Heart left ventricle (tissue), 16 donors: ENCODE measurements at regions of chr19 and their contacts with region 1.

Region 1: DNA sequence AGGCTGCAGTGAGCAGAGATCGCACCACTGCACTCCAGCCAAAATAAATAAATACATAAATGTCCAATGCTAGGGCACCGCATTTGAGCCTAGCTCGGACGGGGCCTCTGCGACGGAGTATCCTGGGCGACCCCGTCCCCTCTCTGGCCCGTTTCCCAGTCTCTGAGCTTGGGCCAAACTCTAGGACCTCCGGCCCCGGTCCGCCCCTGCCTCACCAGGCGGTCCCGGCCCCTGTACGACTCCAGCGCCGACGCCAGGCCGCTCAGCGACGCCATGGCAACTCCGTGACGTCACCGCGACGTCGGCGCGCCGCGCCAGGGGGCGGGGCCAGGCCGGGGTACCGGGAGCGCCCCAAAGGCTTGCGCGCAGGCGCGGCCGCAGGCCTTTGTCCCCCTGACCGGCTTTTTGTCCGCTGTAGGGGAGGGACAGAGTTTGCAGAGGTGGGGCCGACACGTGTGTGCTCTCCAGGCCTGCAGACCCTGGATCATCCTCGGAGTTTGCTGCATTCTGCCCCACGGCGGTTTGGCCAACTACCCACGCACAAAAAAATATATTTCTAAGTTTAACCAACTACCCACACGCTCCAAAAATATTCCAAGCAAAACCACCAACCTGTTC is at the start of gene PEX11G:
- DNase-seq: peak; percentile 91 to 97 (median 93)
- ATAC-seq: peak; percentile 90 to 99 (median 98)
- H3K4me3 ChIP-seq: peak within 1 kb of the TSS; percentile 45 to 90 (median 64)
- H3K27ac ChIP-seq: peak within 1 kb of the TSS in 11 of 12 donors; percentile 65 to 93 (median 82)
- H3K4me1 ChIP-seq: peaks cover 0 to 34% (median 7%) of the 10 kb centered on the region in 12 donors
- H3K27me3 ChIP-seq: no peaks in the 10 kb centered on the region
- CTCF ChIP-seq: no peak
- POLR2A ChIP-seq: peak; percentile 38 to 89
- total RNA-seq, gene PEX11G: 0.93 to 2.9 (median 1.5) TPM

Region 2: DNA sequence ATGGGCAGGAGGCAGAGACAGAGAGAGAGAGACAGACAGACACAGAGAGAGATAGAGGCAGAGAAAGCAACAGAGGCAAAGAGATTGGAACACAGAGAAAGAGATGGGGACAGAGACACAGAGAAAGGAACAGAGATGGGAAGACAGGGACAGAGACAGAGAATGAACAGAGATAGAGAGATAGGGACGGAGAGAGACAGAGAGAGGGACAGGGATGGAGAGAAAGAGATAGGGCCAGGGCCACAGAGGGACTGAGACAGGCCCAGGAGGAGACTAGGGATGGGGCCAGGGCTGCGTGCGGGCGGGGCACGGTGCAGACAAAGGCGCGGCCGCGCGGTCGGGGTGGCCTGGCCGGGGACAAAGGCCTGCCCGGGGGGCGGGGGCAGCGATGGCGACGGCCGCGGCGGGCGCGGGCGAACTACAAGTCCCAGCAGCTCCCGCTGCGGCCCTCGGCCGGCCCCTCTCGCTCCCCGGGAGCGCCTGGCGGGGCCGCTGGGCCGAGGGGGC is 26.9 kb after region 1 on chr19 and contains the start of gene ZNF358:
- intact Hi-C with region 1: loop called in 4 of 10 experiments (anchors 2 to 5 kb)
- DNase-seq: peak; percentile 81 to 91 (median 84)
- ATAC-seq: peak; percentile 59 to 92 (median 88)
- H3K4me3 ChIP-seq: peak within 1 kb of the TSS; percentile 69 to 94 (median 80)
- H3K27ac ChIP-seq: peak within 1 kb of the TSS; percentile 79 to 96 (median 90)
- H3K4me1 ChIP-seq: peaks cover 0 to 26% (median 15%) of the 10 kb centered on the region in 12 donors
- H3K27me3 ChIP-seq: no peaks in the 10 kb centered on the region
- CTCF ChIP-seq: no peak
- POLR2A ChIP-seq: peak in 1 of 2 donors; percentile 28
- total RNA-seq, gene ZNF358: 62.8 to 128 (median 74.4) TPM

Region 3: GRCh38 chr19:7522072-7522922 is 33.5 kb after region 1 on chr19 and contains the start of gene MCOLN1:
- intact Hi-C with region 1: loop called in 3 of 10 experiments (anchors 5 kb)
- DNase-seq: peak; percentile 99 to 100 (median 100)
- ATAC-seq: peak; percentile 92 to 98 (median 92)
- H3K4me3 ChIP-seq: peak within 1 kb of the TSS; percentile 67 to 97 (median 86)
- H3K27ac ChIP-seq: peak within 1 kb of the TSS in 11 of 12 donors; percentile 28 to 84 (median 66)
- H3K4me1 ChIP-seq: peaks cover 0 to 41% (median 18%) of the 10 kb centered on the region in 12 donors
- H3K27me3 ChIP-seq: no peaks in the 10 kb centered on the region
- CTCF ChIP-seq: no peak
- POLR2A ChIP-seq: peak in 1 of 2 donors; percentile 83
- total RNA-seq, gene MCOLN1: 12.1 to 49.7 (median 14.9) TPM

Region 4: GRCh38 chr19:7535035-7535992 is 46.5 kb after region 1 on chr19 and contains the start of gene PNPLA6:
- intact Hi-C with region 1: loop called in 2 of 10 experiments (anchors 1 to 5 kb)
- DNase-seq: peak; percentile 96 to 98 (median 97)
- ATAC-seq: peak; percentile 78 to 90 (median 86)
- H3K4me3 ChIP-seq: peak within 1 kb of the TSS; percentile 62 to 98 (median 86)
- H3K27ac ChIP-seq: peak within 1 kb of the TSS; percentile 57 to 96 (median 93)
- H3K4me1 ChIP-seq: peaks cover 0 to 25% (median 10%) of the 10 kb centered on the region in 12 donors
- H3K27me3 ChIP-seq: no peaks in the 10 kb centered on the region
- CTCF ChIP-seq: no peak
- POLR2A ChIP-seq: peak in 1 of 2 donors; percentile 68
- total RNA-seq, gene PNPLA6: 41.4 to 105 (median 49.9) TPM